PC-9 (cell line): ENCODE measurements at regions of chr12 and their contacts with region 1.

Region 1: DNA sequence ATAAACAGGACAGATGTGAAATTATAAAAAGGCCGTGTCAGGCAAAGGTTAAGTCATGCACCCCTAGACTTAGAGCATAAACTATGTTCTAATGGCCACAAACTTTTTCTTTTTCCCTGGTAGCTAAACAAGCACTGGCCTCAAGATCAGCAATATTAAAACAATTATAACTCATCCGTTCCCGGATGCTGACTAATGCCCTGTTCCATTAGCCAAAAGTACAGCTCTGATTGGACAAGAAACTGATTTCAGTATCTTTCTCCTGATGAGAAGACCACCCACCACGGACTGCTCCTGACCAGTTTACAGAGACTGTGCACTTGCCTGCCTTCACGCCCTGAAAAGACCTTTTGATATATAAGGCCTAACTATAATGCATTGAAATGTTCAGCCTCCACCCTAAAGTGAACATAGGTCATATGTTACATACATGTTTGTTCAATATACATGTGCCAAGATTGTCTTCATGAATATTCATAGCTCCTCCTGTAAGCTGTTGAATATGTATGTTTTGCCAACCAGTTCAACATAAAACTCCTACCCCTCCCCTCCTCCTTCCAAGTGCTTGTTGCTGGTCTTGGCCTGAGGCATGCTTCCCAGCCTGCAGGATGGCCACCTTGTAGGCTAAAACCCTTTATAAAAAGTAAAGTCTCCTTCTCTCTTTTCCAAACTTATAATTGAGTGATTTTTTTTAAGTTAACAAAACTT is 162.0 kb downstream of the IPO8 start:
- DNase-seq: no peak
- H3K4me3 ChIP-seq: no peak overlapping the region
- H3K27ac ChIP-seq: no peak overlapping the region
- H3K4me1 ChIP-seq: no peaks in the 10 kb centered on the region
- H3K27me3 ChIP-seq: no peaks in the 10 kb centered on the region
- CTCF ChIP-seq: no peak

Region 2: DNA sequence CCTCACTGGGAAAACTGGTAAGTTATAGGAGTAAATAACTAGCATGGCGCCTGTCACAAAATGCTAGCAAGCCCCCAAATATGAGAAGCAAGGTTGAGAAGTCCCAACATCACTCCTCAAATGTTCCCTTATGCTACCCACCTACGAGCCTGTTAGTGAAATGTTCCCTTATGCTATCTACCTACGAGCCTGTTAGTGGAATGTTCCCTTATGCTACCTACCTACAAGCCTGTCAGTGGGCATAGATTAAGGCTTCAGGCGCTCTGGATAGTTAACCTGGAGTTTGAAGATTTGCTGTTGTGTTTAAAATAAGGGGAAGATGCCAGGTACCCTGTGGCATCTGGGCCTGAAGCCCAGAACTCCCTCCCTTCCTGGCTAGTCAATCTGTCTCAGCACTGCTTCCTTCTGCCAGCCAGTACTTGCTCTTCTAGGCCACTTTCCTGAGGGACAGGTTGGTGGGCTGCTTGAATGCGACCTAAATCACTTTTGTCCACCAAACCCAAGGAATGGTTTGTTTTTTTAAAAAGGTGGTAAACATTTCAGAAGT is 859.4 kb after region 1 on chr12:
- CTCF ChIA-PET with region 1: interaction called, 10 read pairs
- POLR2A ChIA-PET with region 1: no interaction called
- intact Hi-C with region 1: no loop called
- DNase-seq: no peak
- H3K4me3 ChIP-seq: no peak overlapping the region
- H3K27ac ChIP-seq: no peak overlapping the region
- H3K4me1 ChIP-seq: no peaks in the 10 kb centered on the region
- H3K27me3 ChIP-seq: no peaks in the 10 kb centered on the region
- CTCF ChIP-seq: no peak